ENCODE measurements at regions of chr3 and their contacts with region 1.

Region 1: DNA sequence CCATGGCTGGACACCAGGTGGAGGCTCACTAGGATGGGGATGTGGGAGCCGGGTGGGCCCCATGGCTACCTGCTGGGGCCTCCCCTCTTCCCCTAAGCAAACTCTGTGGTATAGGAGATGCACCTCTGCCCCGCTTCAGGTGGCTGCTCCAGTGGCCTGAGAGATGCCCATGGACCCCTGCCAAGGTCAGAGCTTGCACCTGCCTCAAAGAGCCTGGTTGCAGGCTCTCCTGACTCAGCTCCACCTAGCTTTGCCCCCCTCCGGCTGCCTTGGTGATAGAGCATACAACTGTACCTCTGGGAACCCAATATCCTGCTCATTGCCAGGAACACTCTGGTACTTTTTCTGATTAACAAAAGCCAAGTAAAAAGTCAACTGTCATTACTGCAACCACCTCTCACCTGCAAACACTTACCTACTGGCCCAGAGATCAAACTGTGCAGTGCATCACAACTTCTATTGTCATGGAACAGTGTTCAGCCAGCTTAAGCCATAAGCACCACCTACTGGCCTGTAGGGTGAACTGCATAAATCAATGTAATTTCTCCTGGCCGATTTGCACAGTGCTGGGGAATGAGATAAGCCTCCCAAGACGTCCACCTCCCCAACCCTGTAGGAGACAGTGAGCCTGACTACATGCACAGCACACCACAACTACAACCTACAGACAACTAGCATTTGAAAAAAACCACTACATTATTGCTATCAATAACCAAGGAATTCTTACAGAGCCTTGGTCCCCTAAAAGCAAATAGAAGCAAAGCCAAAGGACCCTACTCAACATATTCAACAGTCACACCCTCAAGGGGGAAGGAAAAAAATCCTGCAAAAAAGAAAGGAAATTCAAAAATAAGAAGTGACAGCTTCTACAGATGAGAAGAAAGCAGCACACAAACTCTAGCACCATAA is 352.4 kb upstream of the ARHGEF26 start:
- DNase-seq: peak in 4 of 5 donors; percentile 39 to 63 (median 44)
- H3K4me3 ChIP-seq: no peak overlapping the region
- H3K27ac ChIP-seq: no peak overlapping the region
- H3K4me1 ChIP-seq: no peaks in the 10 kb centered on the region
- H3K27me3 ChIP-seq: no peaks in the 10 kb centered on the region
- CTCF ChIP-seq: peak; percentile 86

Region 2: GRCh38 chr3:152969561-152970240 is 799.1 kb before region 1 on chr3:
- intact Hi-C with region 1: no loop called
- DNase-seq: no peak
- H3K4me3 ChIP-seq: no peak overlapping the region
- H3K27ac ChIP-seq: no peak overlapping the region
- H3K4me1 ChIP-seq: no peaks in the 10 kb centered on the region
- H3K27me3 ChIP-seq: no peaks in the 10 kb centered on the region
- CTCF ChIP-seq: no peak

Region 3: GRCh38 chr3:153038779-153039178 is 730.0 kb before region 1 on chr3:
- intact Hi-C with region 1: loop called (anchors 10 kb)
- DNase-seq: no peak
- H3K4me3 ChIP-seq: no peak overlapping the region
- H3K27ac ChIP-seq: no peak overlapping the region
- H3K4me1 ChIP-seq: no peaks in the 10 kb centered on the region
- H3K27me3 ChIP-seq: no peaks in the 10 kb centered on the region
- CTCF ChIP-seq: no peak

Region 4: GRCh38 chr3:155202621-155203020 is 1433.8 kb after region 1 on chr3:
- intact Hi-C with region 1: no loop called
- DNase-seq: no peak
- H3K4me3 ChIP-seq: no peak overlapping the region
- H3K27ac ChIP-seq: no peak overlapping the region
- H3K4me1 ChIP-seq: no peaks in the 10 kb centered on the region
- H3K27me3 ChIP-seq: no peaks in the 10 kb centered on the region
- CTCF ChIP-seq: no peak